Activated CD4-positive, alpha-beta T cell treated with anti-CD3 and anti-CD28 coated beads for 36 hours (primary cell): ENCODE measurements at regions of chr3 and their contacts with region 1.

Region 1: DNA sequence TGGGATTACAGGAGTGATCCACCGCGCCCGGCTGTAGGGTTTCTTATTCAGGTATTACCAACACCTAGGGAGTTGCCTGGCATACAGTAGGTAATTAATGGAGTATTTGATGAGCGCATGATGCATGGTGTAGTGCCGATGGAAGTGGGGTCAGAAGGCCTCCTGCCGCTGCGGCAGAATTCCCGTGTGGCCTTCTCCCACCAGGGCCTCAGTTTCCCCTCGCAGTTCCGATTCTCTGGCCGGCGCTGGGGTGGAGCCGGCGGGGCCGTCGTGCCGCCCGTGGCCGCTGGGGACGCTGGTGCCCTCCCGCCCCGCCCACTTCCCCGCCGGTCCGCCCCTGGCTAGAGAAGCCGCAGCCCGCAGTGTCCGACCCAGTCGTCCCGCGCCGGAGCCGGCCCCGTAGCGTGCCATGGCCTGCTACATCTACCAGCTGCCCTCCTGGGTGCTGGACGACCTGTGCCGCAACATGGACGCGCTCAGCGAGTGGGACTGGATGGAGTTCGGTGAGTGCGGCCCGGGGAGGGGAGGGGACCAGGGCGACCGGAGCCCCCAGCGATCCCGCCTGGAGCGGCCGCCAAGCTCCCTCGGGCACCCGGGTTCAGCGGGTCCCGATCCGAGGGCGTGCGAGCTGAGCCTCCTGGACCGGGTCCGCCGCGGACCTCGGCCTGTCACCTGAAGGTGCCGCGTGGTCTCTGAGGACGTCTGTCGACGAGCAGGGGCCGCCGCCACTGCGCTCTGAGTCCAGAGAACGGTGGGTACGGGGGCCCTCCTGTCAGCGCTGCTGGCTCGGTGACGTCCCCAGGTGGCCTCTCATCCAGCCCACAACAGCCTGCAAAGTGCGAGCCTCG is at the start of gene IRAK2:
- DNase-seq: peak; percentile 83
- ATAC-seq: peak; percentile 79
- H3K4me3 Mint-ChIP-seq: peak within 1 kb of the TSS; percentile 70
- H3K27ac Mint-ChIP-seq: peak within 1 kb of the TSS; percentile 13
- H3K4me1 Mint-ChIP-seq: peaks cover 21% of the 10 kb centered on the region
- H3K27me3 Mint-ChIP-seq: no peaks in the 10 kb centered on the region
- total RNA-seq, gene IRAK2: 3.9 to 4.0 TPM

Region 2: DNA sequence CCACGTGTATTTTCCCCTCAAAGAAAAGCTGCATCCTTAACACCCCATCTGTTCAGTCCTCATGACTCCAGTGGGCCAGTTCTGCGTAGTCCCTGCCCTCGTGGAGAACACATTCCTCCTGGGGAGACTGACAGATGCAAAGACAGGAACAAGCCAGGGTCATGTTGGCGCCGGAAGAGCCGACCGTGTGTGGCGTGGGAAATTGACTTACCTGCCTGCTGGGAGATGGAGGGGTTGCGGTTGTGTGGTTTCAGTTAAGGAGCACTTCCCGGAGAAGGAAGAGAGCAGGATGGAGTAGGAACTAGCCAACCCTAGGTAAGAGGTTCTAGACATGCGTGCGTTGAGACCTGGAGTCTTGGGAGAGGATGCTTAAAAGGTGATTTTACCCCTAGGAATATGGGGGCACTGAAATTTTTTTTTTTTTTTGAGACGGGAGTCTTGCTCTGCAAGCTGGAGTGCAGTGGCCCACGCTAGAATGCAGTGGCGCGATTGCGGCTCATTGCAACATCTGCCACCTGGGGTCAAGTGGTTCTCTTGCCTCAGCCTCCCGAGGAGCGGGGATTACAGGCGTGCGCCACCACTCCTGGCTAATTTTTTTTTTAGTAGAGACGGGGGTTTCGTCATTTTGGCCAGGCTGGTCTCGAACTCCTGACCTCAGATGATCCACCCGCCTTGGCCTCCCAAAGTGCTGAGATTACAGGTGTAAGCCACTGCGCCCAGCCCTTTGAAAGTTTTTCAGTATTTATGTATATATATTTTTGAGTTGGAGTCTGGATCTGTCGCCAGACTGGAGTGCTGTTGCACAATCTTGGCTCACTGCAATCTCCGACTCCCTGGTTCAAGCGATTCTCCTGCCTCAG is 21.8 kb before region 1 on chr3:
- CTCF ChIA-PET with region 1: interaction called, 3 read pairs
- POLR2A ChIA-PET with region 1: no interaction called
- intact Hi-C with region 1: loop called in 1 of 2 experiments (anchors 1 kb)
- DNase-seq: peak; percentile 57
- ATAC-seq: peak; percentile 15
- H3K4me3 Mint-ChIP-seq: peak overlapping the region; percentile 97
- H3K27ac Mint-ChIP-seq: peak overlapping the region; percentile 89
- H3K4me1 Mint-ChIP-seq: peaks cover 28% of the 10 kb centered on the region
- H3K27me3 Mint-ChIP-seq: no peaks in the 10 kb centered on the region